ENCODE measurements at regions of chr4 and their contacts with region 1.

Region 1: DNA sequence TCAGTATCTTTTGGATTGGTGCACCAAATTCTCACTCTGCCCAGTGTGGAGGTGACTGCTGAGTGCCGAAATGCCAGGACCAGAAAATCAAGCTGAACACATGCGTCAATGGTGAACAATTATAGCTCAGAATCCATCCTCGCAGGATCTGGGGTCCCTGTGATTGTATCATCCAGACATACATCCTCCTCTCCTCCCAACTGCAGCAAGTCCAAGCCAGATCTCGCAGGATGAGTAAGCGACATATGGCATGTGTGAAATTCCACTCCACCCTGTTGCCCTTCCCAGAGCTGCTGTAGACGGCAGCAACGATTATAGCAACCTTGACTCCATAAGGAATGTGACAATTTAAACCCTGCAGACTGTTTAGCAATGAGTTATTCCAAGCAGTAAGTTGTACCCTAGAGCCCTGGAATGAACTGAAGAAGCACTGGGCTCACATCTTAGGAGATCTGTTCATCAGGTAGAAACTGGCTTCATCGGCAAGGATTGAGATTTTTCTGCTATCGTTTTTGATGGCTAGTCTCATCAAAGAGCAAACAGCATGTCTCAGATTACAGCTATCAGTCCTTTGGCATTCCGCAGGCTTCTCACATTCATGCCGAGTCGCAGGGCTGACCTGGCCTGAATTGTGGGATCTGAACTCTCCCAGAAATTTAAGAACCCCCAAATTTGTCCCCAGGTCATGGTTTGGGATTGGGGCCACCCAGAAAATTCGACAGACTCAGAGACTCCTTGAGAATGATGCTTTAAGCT is 35.5 kb upstream of the SORBS2 start:
- DNase-seq: peak; percentile 68 to 88 (median 79)
- ATAC-seq: peak; percentile 87 to 92 (median 90)
- H3K4me3 ChIP-seq: no peak overlapping the region
- H3K27ac ChIP-seq: peak overlapping the region; percentile 52 to 90 (median 78)
- H3K4me1 ChIP-seq: peaks cover 0 to 37% (median 9%) of the 10 kb centered on the region in 12 donors
- H3K27me3 ChIP-seq: no peaks in the 10 kb centered on the region
- CTCF ChIP-seq: no peak
- POLR2A ChIP-seq: no peak

Region 2: GRCh38 chr4:185748901-185749390 is 98.6 kb before region 1 on chr4:
- intact Hi-C with region 1: loop called in 1 of 10 experiments (anchors 5 kb)
- DNase-seq: no peak
- ATAC-seq: peak in 3 of 4 donors; percentile 11 to 18 (median 13)
- H3K4me3 ChIP-seq: no peak overlapping the region
- H3K27ac ChIP-seq: peak overlapping the region in 3 of 12 donors; percentile 3 to 33 (median 25)
- H3K4me1 ChIP-seq: peaks cover 0 to 92% (median 27%) of the 10 kb centered on the region in 12 donors
- H3K27me3 ChIP-seq: no peaks in the 10 kb centered on the region
- CTCF ChIP-seq: no peak
- POLR2A ChIP-seq: no peak

Region 3: DNA sequence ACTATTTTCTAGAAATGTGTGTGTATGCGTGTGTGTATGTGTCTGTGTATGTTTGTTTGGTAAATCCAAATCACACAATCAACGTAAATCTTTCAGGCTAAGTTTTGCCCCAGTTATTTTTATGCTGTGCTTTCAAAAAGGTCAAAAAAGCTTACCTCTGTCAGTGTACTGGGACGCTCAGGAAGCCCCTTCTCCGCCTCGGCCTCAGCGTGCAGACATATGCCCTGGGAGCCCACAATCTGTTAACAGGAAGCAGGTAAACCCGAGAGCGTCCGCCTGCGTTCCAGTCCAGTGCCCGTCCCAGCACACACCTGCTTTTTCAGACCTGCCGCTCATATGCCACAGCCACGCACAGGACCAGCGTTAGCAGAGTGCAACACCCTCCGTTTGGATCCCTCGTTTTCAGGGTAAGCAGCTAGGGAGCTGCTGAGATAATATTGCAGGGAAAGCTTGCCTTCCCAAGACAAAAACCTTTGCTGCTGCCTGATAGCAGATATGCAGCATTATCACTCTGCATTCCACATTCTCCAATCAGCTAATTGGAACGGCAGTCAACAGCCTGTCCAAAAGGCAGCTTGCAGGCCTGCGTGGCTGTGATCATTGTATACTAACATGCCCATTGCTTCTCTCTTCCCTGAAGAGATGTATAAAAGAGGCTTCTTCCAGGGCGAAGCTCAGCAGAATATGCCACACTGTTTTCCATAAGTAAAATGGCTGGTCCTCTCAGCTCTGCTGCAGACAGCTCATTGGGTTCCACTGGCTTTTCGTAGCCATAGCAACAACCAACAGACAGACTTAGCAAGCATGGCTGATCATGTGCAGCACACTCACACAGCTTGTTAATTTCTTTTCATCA is 35.8 kb before region 1 on chr4 and contains the start of gene SORBS2:
- intact Hi-C with region 1: loop called in 4 of 10 experiments (anchors 5 kb)
- DNase-seq: peak in 2 of 5 donors; percentile 62
- ATAC-seq: peak; percentile 59 to 81 (median 79)
- H3K4me3 ChIP-seq: peak within 1 kb of the TSS; percentile 35 to 71 (median 59)
- H3K27ac ChIP-seq: peak within 1 kb of the TSS; percentile 72 to 95 (median 82)
- H3K4me1 ChIP-seq: peaks cover 0 to 3% (median 0%) of the 10 kb centered on the region in 12 donors
- H3K27me3 ChIP-seq: no peaks in the 10 kb centered on the region
- CTCF ChIP-seq: no peak
- POLR2A ChIP-seq: peak in 1 of 2 donors; percentile 60
- total RNA-seq, gene SORBS2: 966 to 2,158 (median 1,443) TPM

Measured in heart left ventricle (tissue), 16 donors.